Tibial artery (tissue), 4 donors: ENCODE measurements at regions of chr11 and their contacts with region 1.

Region 1: DNA sequence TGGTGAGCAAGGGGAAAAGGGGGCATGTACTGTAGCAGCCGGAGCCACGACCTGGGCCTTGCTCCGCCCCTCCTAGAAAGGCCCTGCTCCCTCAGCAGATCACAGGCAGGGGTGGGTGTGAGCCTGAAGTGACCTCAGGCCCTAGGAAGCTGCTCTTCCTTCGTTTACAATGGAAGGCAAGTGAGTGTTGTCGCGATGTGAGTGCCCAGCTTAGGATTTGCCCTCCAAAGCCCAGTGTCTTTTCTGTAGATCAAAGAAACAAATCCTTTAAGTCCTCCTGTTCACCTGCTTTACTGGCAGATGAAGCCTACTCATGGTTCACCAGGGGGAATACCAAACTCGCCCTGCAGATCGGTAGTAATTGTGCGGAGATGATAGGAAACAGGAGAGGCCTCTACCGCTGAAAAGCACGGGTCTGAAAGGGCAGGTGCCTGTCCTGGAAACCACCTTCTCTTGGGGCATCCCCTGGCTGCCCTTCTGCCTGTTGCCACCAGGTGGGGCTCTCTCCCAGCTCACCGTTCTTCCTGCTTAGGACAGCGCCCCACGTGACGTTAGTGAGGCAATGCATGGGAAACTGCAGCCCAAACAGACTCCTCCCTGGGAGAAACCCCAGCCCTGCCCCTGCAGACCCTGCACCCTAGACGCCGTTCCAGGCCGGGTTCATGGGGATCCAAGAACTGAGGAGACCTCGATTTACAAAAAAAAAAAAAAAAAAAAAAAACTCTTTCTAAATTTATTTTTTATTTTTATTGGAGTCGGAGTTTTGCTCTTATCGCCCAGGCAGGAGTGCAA is 45.9 kb upstream of the RAB1B start:
- DNase-seq: peak; percentile 91 to 92
- H3K4me3 ChIP-seq: no peak overlapping the region
- H3K27ac ChIP-seq: no peak overlapping the region
- H3K4me1 ChIP-seq: peaks cover 0 to 4% (median 0%) of the 10 kb centered on the region in 4 donors
- H3K27me3 ChIP-seq: no peaks in the 10 kb centered on the region
- CTCF ChIP-seq: peak; percentile 100

Region 2: DNA sequence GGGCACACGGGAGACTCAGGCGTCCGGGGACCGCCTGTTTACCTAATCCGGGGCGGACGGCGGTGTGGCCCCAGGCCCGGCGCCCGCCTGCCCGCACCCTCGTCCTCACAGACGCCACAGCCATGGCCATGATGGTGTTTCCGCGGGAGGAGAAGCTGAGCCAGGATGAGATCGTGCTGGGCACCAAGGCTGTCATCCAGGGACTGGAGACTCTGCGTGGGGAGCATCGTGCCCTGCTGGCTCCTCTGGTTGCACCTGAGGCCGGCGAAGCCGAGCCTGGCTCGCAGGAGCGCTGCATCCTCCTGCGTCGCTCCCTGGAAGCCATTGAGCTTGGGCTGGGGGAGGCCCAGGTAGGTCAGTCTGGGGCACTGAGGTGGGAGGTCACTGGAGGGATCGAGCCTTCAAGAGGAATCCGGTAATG is 35.9 kb after region 1 on chr11:
- intact Hi-C with region 1: loop called (anchors 2 kb)
- DNase-seq: no peak
- H3K4me3 ChIP-seq: peak overlapping the region; percentile 91 to 99
- H3K27ac ChIP-seq: peak overlapping the region; percentile 78 to 91
- H3K4me1 ChIP-seq: peaks cover 0 to 23% (median 10%) of the 10 kb centered on the region in 4 donors
- H3K27me3 ChIP-seq: no peaks in the 10 kb centered on the region
- CTCF ChIP-seq: no peak

Region 3: DNA sequence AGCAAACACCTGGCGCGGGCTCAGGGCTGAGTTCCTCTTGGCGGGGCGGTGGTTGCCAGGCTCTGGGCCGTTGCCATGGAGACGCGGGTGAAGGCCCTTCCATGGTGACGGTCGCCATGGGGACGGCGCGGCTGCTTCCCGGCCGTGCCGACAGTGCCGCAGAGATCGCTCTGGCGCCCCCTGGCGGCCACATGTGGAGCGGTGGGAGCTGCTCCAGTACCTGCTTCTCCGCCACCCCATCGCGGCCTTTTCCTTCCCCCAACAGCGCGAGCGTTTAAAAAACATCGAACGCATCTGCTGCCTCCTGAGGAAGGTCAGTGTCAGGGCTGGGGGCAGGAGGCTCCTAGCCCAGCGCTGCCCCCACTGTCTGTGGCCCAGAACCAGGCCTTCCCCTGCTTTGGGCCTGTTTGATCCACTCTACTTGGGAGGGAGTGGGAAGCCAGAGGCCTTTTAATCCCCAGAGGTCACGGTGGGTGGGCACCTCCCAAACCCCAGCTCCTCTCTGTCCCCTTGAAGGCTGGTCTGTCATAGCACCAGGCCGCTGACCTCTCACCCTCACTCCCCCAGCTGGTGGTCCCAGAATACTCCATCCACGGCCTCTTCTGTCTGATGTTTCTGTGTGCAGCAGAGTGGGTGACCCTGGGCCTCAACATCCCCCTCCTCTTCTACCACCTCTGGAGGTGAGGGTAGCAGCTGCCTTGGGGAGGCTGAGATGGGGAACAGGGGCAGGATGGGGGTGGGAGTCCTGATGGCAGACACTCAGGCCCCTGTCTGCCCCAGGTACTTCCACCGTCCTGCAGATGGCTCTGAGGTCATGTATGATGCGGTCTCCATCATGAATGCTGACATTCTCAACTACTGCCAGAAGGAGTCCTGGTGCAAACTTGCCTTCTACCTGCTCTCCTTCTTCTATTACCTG is 60.2 kb after region 1 on chr11:
- intact Hi-C with region 1: loop called (anchors 2 kb)
- DNase-seq: peak; percentile 97 to 98
- H3K4me3 ChIP-seq: no peak overlapping the region
- H3K27ac ChIP-seq: no peak overlapping the region
- H3K4me1 ChIP-seq: peaks cover 3 to 30% (median 27%) of the 10 kb centered on the region in 4 donors
- H3K27me3 ChIP-seq: no peaks in the 10 kb centered on the region
- CTCF ChIP-seq: peak; percentile 98 to 99